ENCODE measurements at regions of chr17 and their contacts with region 1.

Region 1: GRCh38 chr17:74361230-74362068 is at the start of gene BTBD17:
- DNase-seq: peak; percentile 83 to 84
- H3K4me3 ChIP-seq: no peak within 1 kb of the TSS
- H3K27ac ChIP-seq: peak within 1 kb of the TSS in 2 of 3 donors; percentile 10 to 24
- H3K4me1 ChIP-seq: peaks cover 20 to 30% of the 10 kb centered on the region in 2 donors
- H3K27me3 ChIP-seq: no peaks in the 10 kb centered on the region
- CTCF ChIP-seq: peak; percentile 62 to 91 (median 74)
- POLR2A ChIP-seq: no peak
- total RNA-seq, gene BTBD17: 0.67 to 0.89 TPM in 2 of 4 donors, not detected in the others

Region 2: GRCh38 chr17:74206332-74206818 is 155.1 kb before region 1 on chr17:
- intact Hi-C with region 1: loop called (anchors 5 kb)
- DNase-seq: no peak
- H3K4me3 ChIP-seq: no peak overlapping the region
- H3K27ac ChIP-seq: no peak overlapping the region
- H3K4me1 ChIP-seq: peaks cover 21 to 42% of the 10 kb centered on the region in 2 donors
- H3K27me3 ChIP-seq: no peaks in the 10 kb centered on the region
- CTCF ChIP-seq: no peak
- POLR2A ChIP-seq: no peak

Region 3: GRCh38 chr17:74296548-74296936 is 64.9 kb before region 1 on chr17:
- intact Hi-C with region 1: loop called (anchors 2 kb)
- DNase-seq: peak; percentile 88 to 89
- H3K4me3 ChIP-seq: no peak overlapping the region
- H3K27ac ChIP-seq: peak overlapping the region; percentile 26 to 85 (median 76)
- H3K4me1 ChIP-seq: peaks cover 30 to 45% of the 10 kb centered on the region in 2 donors
- H3K27me3 ChIP-seq: no peaks in the 10 kb centered on the region
- CTCF ChIP-seq: peak; percentile 22 to 77 (median 65)
- POLR2A ChIP-seq: no peak

Region 4: GRCh38 chr17:74552037-74552436 is 190.6 kb after region 1 on chr17:
- intact Hi-C with region 1: no loop called
- DNase-seq: no peak
- H3K4me3 ChIP-seq: no peak overlapping the region
- H3K27ac ChIP-seq: no peak overlapping the region
- H3K4me1 ChIP-seq: no peaks in the 10 kb centered on the region
- H3K27me3 ChIP-seq: no peaks in the 10 kb centered on the region
- CTCF ChIP-seq: no peak
- POLR2A ChIP-seq: no peak